PC-3 (cell line): ENCODE measurements at regions of chr10 and their contacts with region 1.

Region 1: GRCh38 chr10:91409869-91410637 is at the start of gene HECTD2:
- DNase-seq: peak; percentile 61
- ATAC-seq: peak; percentile 79
- H3K4me3 ChIP-seq: peak within 1 kb of the TSS; percentile 81
- H3K27ac ChIP-seq: peak within 1 kb of the TSS; percentile 88
- H3K4me1 ChIP-seq: peaks cover 17% of the 10 kb centered on the region
- H3K27me3 ChIP-seq: no peaks in the 10 kb centered on the region
- CTCF ChIP-seq: peak; percentile 22; the same call in 1 of the 2 replicates
- total RNA-seq, gene HECTD2: 2.9 and 4.0 TPM in 2 replicates

Region 2: DNA sequence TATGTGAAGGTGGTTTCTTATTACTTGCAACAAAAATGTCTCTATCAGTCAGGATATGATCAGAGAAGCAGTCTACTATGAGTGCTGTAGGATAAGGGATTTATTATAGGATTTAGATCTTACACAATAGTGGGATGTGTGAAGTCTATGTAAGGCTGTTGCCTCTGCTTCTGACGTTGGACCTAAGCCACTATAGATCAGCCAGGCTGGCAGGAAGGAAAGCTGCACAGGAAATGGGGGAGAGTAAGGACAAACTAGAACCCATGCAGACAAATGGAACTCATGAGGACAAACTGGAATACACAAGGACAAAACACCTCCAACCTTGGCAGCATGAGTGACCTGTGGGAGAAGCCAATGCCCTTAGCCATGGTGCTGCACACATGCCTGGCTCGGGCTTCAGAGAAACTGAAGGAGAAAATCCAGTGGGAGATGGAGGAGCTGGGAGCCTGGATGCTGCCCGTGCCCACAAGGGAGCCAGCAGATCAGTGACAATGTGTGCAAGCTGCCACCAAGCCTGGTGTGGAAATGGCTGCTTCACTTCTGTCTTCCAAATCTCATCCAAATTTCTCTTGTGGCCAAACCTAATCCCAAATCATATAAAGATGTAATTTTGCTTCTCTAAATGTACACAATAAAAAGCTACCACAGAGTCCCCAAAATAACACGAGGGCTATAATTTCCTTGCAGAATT is 336.6 kb before region 1 on chr10:
- CTCF ChIA-PET with region 1: no interaction called
- POLR2A ChIA-PET with region 1: no interaction called
- intact Hi-C with region 1: no loop called
- DNase-seq: no peak
- ATAC-seq: no peak
- H3K4me3 ChIP-seq: no peak overlapping the region
- H3K27ac ChIP-seq: no peak overlapping the region
- H3K4me1 ChIP-seq: no peaks in the 10 kb centered on the region
- H3K27me3 ChIP-seq: peaks cover 50% of the 10 kb centered on the region
- CTCF ChIP-seq: no peak

Region 3: DNA sequence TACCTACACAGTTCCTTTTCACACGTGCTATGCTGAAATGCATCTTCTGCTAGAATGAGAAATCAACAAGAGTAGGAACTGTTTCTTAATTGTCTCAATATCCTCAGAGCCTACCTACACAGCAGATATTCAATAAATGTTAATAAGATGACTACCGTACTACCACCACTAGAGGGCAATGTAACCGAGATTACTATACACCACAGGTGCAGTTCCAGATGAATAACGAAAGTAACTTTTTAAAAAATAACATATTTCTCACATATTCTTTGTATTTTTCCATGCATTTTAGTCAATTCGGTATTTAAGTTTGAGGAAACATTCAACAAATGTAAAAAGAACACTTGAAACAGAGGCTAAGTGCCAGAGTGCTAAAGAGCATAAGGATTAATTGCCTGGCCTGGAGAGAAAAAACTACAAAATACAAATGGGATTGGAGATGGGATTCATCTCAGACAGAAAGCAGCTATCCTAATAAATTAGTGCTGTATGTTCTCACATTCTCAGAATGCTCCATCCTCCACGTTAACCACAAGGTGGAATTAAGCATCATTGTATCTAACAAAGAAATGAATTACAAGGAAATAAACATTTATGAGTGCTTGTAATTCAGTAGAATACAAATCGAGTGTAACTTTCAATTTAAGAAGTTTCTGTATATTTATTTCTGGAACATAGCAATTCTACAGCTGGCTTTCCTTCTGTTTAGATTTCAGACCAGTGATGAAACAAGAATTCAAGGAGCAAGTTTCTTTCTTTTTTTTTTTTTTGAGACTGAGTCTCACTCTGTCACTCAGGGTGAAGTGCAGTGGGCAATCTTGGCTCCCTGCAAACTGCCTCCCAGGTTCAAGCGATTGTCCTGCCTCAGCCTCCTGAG is 20.2 kb before region 1 on chr10:
- CTCF ChIA-PET with region 1: interaction called, 3 read pairs
- POLR2A ChIA-PET with region 1: no interaction called
- intact Hi-C with region 1: loop called (anchors 2 kb)
- DNase-seq: peak; percentile 71
- ATAC-seq: peak; percentile 80
- H3K4me3 ChIP-seq: peak overlapping the region; percentile 41; the same call in 1 of the 2 replicates
- H3K27ac ChIP-seq: no peak overlapping the region
- H3K4me1 ChIP-seq: no peaks in the 10 kb centered on the region
- H3K27me3 ChIP-seq: no peaks in the 10 kb centered on the region; the same call in 1 of the 2 replicates
- CTCF ChIP-seq: peak; percentile 62

Region 4: GRCh38 chr10:91462423-91462822 is 52.4 kb after region 1 on chr10:
- CTCF ChIA-PET with region 1: no interaction called
- POLR2A ChIA-PET with region 1: no interaction called
- intact Hi-C with region 1: loop called (anchors 5 kb)
- DNase-seq: peak; percentile 60
- ATAC-seq: peak; percentile 69
- H3K4me3 ChIP-seq: no peak overlapping the region
- H3K27ac ChIP-seq: no peak overlapping the region
- H3K4me1 ChIP-seq: peaks cover 5% of the 10 kb centered on the region; the same call in 1 of the 2 replicates
- H3K27me3 ChIP-seq: no peaks in the 10 kb centered on the region
- CTCF ChIP-seq: no peak

Region 5: GRCh38 chr10:91551856-91552255 is 141.8 kb after region 1 on chr10:
- CTCF ChIA-PET with region 1: no interaction called
- POLR2A ChIA-PET with region 1: no interaction called
- intact Hi-C with region 1: loop called (anchors 5 kb)
- DNase-seq: peak; percentile 40
- ATAC-seq: peak; percentile 90
- H3K4me3 ChIP-seq: no peak overlapping the region
- H3K27ac ChIP-seq: no peak overlapping the region
- H3K4me1 ChIP-seq: 0 out of 2 replicates have a peak, but pooled peaks cover 4% of the 10 kb centered on the region
- H3K27me3 ChIP-seq: no peaks in the 10 kb centered on the region
- CTCF ChIP-seq: peak; percentile 78